ENCODE measurements at regions of chr1 and their contacts with region 1.

Region 1: GRCh38 chr1:41003640-41004220 is 17.8 kb downstream of the SLFNL1 start:
- DNase-seq: peak; percentile 98
- H3K4me3 Mint-ChIP-seq: no peak overlapping the region
- H3K27ac Mint-ChIP-seq: no peak overlapping the region
- H3K4me1 Mint-ChIP-seq: peaks cover 38% of the 10 kb centered on the region
- H3K27me3 Mint-ChIP-seq: no peaks in the 10 kb centered on the region

Region 2: DNA sequence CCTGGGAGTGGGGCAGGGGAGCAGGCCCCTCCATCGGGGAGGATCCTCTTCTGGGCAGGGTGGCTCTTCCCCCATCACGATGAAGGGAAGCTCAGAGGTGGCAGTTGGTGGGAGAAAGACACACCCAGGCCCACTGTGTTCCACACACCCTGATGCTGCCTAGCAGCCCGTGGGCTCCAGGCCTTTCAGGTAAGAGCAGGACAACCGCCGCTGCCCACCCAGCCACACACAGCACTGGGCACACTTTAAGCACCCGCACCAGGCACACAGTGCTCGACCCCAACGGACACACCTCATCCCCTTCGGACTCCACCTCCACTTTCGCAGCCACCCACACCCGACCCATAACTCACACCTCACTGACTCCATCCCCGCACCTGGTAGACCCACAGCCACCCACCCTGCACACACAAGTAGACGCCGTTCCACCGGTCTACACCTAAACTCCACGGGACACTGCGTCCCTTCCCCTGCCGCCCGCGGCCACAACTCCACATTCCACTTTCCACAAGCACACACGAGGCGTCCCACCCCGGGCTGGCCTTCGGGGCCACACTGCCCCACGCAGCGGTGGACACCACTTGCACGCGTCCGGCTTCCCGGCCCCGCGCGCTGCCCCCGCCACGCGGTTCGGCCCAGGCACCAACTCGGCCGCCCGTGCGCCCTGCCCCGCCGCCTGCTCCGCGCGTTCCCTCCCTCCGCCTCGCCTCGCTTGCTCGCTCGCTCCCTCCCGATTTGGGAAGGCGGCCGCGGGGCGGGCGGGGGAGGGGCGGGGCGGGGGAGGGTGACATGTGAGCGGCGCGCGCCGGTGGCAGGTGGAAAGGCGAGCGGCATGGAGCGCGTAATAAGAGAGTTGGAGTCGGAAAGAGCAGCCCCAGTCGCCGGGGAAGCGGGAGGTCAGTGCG is 220.5 kb before region 1 on chr1 and contains the start of gene KCNQ4:
- CTCF ChIA-PET with region 1: no interaction called
- intact Hi-C with region 1: no loop called
- DNase-seq: peak; percentile 43
- H3K4me3 Mint-ChIP-seq: peak within 1 kb of the TSS; percentile 63
- H3K27ac Mint-ChIP-seq: no peak within 1 kb of the TSS
- H3K4me1 Mint-ChIP-seq: peaks cover 7% of the 10 kb centered on the region
- H3K27me3 Mint-ChIP-seq: peaks cover 15% of the 10 kb centered on the region
- total RNA-seq, gene KCNQ4: 0.49 to 0.50 TPM

Region 3: DNA sequence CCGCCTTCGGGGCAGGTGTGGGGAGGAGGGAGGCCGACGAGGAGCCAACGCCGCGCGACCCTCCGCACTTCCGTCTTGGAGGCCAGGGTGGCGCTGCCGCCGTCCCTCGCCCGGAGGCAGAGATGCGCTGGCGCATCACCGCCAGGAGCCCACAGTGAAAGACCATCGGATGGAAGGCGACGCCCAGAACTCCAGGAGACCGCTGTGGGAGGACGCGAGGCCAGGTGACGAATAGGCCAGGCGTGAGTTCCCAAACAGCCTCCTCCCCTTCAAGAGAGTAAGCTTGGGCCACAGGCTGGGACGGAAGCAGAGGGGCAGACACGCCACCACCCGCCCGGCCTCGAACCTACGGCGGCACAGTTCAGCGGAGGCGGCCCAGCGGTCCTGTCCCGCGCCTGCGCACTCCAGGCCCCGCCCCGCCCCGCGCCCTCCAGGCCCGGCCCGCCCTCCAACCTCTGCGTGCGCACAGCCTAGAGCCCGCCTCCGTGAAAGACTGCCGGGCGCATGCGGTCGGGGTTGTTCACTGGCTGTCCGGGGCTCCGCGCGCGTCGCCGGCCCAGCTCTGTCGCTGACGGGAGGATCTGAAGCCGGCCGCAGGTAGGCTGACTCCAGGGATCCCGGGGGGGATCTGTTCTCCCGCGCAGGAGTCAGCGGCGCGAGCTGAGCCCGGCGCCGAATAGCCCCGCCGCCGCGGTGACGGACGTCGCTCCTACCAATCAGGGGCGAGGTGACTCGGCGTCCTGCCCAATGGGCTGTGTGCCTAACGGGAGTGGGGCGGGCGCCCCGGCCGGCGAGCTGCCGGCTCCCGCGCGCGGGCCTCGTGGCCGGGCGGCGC is 24.3 kb before region 1 on chr1 and contains the start of gene CTPS1:
- CTCF ChIA-PET with region 1: interaction called, 22 read pairs
- intact Hi-C with region 1: loop called (anchors 1 kb)
- DNase-seq: peak; percentile 96
- H3K4me3 Mint-ChIP-seq: peak within 1 kb of the TSS; percentile 82
- H3K27ac Mint-ChIP-seq: peak within 1 kb of the TSS; percentile 84
- H3K4me1 Mint-ChIP-seq: peaks cover 40% of the 10 kb centered on the region
- H3K27me3 Mint-ChIP-seq: no peaks in the 10 kb centered on the region
- total RNA-seq, gene CTPS1: 74.9 to 75.1 TPM